Caco-2 (cell line): ENCODE measurements at regions of chr11 and their contacts with region 1.

Region 1: DNA sequence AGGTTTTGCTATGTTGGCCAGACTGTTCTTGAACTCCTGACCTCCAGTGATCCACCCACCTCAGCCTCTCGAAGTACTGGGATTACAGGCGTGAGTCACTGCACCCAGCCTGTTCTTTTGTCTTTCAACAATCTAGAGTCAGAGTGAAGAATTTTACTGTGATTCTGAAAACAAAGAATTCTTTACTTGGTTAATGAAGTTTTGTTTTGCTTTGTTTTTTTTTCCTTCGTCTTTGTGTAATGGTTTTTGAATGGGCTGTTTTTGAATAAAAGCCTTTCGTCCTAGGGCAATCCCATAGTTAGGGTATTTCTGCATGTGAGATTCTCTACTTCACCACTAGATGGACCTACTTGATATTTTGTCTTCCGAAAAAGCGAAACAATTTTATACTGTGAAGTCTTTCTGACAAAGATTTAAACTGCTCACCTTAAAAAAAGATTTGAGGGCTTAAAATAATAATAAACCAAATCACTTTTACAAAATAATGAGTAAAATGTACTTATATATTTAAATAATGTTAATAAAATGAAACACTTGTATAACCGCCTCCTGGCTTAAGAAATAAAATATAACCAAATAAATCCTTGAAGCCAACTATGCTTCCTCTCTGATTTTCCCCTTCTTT is 43.4 kb upstream of the SC5D start:
- DNase-seq: peak in 1 of 2 experiments; percentile 37
- H3K4me3 ChIP-seq: no peak overlapping the region
- H3K4me3 Mint-ChIP-seq: no peak overlapping the region
- H3K27ac Mint-ChIP-seq: no peak overlapping the region
- H3K4me1 ChIP-seq: peaks cover 11% of the 10 kb centered on the region
- H3K4me1 Mint-ChIP-seq: peaks cover 18% of the 10 kb centered on the region
- H3K27me3 ChIP-seq: no peaks in the 10 kb centered on the region
- H3K27me3 Mint-ChIP-seq: no peaks in the 10 kb centered on the region
- CTCF ChIP-seq: peak; percentile 69 to 94

Region 2: GRCh38 chr11:121292495-121293287 is 43.5 kb after region 1 on chr11 and contains the start of gene SC5D:
- CTCF ChIA-PET with region 1: interaction called, 14 read pairs
- POLR2A ChIA-PET with region 1: no interaction called
- intact Hi-C with region 1: loop called (anchors 1 kb)
- DNase-seq: peak; percentile 98 to 99
- H3K4me3 ChIP-seq: peak within 1 kb of the TSS; percentile 97
- H3K4me3 Mint-ChIP-seq: peak within 1 kb of the TSS; percentile 89
- H3K27ac Mint-ChIP-seq: peak within 1 kb of the TSS; percentile 85
- H3K4me1 ChIP-seq: peaks cover 16% of the 10 kb centered on the region; the same call in 1 of the 2 replicates
- H3K4me1 Mint-ChIP-seq: peaks cover 27% of the 10 kb centered on the region
- H3K27me3 ChIP-seq: no peaks in the 10 kb centered on the region
- H3K27me3 Mint-ChIP-seq: no peaks in the 10 kb centered on the region
- CTCF ChIP-seq: peak in 1 of 2 experiments; percentile 2
- total RNA-seq, gene SC5D: 106 and 126 TPM in 2 replicates

Region 3: DNA sequence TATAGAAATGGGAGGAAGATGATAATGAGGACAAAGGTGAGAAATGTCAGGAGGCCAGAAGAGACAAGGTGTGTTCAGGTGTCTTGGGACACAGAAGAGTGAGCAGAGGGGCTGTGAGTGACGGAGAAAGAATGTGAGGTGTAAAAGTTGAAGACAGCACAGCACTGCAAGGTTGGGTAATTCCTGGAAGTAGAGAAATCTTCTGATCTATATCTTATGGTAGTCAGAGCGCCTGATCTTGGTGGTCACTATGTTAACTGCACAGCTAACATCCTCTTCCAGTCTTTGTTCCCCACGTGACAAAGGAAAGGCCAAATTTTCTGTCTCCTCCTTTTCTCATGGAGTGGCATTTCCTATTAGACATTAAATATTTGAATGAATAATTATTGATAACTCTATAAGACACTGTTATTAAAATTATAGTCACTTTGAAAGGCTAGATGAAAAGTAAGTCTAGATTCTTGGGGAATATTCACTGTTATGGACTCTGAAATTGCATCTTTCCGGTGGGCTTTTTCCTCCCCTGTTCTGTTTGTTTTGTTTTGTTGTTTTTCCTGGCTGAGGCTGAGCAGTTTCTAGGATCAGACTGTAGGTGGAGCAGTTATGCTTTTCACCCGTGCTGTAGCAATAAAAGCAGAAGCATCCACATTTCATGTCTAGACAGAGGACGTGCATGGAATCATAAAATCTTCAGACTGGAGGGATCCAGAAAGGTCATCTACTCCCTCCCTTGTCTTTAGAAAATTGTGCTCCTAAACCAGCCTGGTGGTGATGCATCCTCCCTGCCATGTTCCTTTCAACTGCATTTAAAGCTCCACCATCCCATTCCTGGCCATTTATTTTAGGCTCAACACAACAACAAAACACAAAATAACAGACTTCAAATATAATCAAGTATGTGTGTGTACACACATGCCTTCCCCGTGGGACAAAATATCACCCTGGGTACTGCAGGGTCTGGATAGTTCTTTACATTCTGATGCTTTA is 70.0 kb after region 1 on chr11:
- CTCF ChIA-PET with region 1: no interaction called
- POLR2A ChIA-PET with region 1: no interaction called
- intact Hi-C with region 1: loop called (anchors 2 kb)
- DNase-seq: peak in 1 of 2 experiments; percentile 61
- H3K4me3 ChIP-seq: no peak overlapping the region
- H3K4me3 Mint-ChIP-seq: no peak overlapping the region
- H3K27ac Mint-ChIP-seq: no peak overlapping the region
- H3K4me1 ChIP-seq: peaks cover 4% of the 10 kb centered on the region; the same call in 1 of the 2 replicates
- H3K4me1 Mint-ChIP-seq: peaks cover 18% of the 10 kb centered on the region
- H3K27me3 ChIP-seq: no peaks in the 10 kb centered on the region
- H3K27me3 Mint-ChIP-seq: peaks cover 12% of the 10 kb centered on the region
- CTCF ChIP-seq: peak; percentile 88 to 95